Mammary epithelial cell (primary cell): ENCODE measurements at regions of chr4 and their contacts with region 1.

Region 1: GRCh38 chr4:80393246-80393969 is 57.9 kb downstream of the CFAP299 start:
- DNase-seq: peak; percentile 72
- H3K4me3 ChIP-seq: no peak overlapping the region
- H3K27ac ChIP-seq: no peak overlapping the region
- H3K4me1 ChIP-seq: peaks cover 4% of the 10 kb centered on the region
- H3K27me3 ChIP-seq: no peaks in the 10 kb centered on the region
- CTCF ChIP-seq: no peak

Region 2: DNA sequence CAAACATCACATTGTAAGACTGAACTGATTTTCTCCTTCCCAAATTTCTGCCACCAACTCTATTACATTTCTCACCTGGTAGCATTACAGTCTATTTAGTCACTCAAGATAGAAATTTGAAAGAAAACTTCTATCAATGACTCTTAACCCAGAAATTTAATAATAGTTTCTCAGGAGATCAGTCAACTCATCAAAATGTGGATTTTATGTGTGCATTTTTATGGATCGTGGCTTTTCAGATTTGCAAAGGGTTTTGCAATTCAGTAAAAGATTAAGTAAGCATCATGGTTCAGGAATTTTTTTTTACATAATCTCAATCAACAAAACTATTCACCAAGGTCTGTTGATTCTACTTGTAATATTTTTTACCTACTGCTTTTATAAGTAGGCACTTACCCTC is 53.3 kb after region 1 on chr4:
- CTCF ChIA-PET with region 1: no interaction called
- dilution Hi-C with region 1: no loop called
- in situ Hi-C with region 1: no loop called
- intact Hi-C with region 1: loop called (anchors 10 kb)
- DNase-seq: peak; percentile 57
- H3K4me3 ChIP-seq: no peak overlapping the region
- H3K27ac ChIP-seq: no peak overlapping the region
- H3K4me1 ChIP-seq: no peaks in the 10 kb centered on the region
- H3K27me3 ChIP-seq: no peaks in the 10 kb centered on the region
- CTCF ChIP-seq: no peak